ENCODE measurements at regions of chr16 and their contacts with region 1.

Region 1: GRCh38 chr16:28863929-28864793 is 518 bp downstream of the SH2B1 start:
- DNase-seq: no peak
- H3K4me3 ChIP-seq: peak overlapping the region; percentile 86 to 100 (median 93)
- H3K27ac ChIP-seq: no peak overlapping the region
- H3K4me1 ChIP-seq: peaks cover 0 to 8% (median 3%) of the 10 kb centered on the region in 4 experiments; a peak in 6 of 7 replicates
- H3K27me3 ChIP-seq: no peaks in the 10 kb centered on the region
- CTCF ChIP-seq: no peak
- EP300 ChIP-seq: peak in 1 of 2 experiments; percentile 82; a peak in 1 of 3 replicates
- POLR2A ChIP-seq: no peak
- RAD21 ChIP-seq: no peak

Region 2: DNA sequence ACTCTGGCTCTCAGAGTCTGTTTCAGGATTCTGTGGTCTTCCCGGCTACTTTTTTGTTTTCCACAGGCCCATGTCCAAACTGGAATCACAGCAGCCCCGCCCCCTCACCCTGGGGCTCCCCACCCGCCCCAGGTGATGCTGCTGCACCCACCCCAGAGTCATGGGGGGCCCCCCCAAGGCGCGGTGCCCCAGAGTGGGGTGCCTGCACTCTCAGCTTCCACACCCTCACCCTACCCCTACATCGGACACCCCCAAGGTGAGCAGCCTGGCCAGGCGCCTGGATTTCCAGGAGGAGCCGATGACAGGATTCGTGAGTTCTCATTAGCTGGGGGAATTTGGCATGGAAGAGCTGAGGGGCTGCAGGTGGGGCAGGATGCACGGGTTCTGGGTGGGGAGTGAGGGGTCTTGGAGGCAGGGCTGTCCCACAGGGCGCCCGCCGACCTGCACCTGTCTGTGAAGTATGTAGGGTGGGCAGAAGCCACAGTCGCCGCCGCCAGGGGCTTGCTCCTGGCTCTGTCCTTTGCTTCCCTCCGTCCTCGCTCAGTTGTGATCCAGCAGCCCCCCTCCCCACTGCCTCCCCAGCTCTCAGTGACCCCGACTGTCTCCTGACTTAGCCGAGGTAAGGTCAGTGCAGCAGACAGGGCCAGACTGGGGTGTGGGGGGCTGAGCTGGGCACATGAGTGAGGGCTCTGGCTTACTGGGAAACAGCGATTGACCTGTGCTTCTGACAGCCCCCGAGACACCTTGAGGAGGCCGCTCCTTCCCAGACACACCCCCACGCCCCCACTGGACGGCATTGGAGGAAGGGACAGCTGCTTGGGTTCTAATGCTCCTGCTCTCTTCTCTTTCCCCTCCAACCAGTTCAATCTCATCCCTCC is 28.1 kb before region 1 on chr16:
- CTCF ChIA-PET with region 1: interaction called, 3 read pairs
- POLR2A ChIA-PET with region 1: interaction called, 164 read pairs
- DNase-seq: no peak
- H3K4me3 ChIP-seq: no peak overlapping the region
- H3K27ac ChIP-seq: no peak overlapping the region
- H3K4me1 ChIP-seq: no peaks in the 10 kb centered on the region
- H3K27me3 ChIP-seq: no peaks in the 10 kb centered on the region
- CTCF ChIP-seq: no peak
- EP300 ChIP-seq: no peak
- POLR2A ChIP-seq: peak in 1 of 2 experiments; percentile 39; a peak in 1 of 3 replicates
- RAD21 ChIP-seq: no peak

Region 3: DNA sequence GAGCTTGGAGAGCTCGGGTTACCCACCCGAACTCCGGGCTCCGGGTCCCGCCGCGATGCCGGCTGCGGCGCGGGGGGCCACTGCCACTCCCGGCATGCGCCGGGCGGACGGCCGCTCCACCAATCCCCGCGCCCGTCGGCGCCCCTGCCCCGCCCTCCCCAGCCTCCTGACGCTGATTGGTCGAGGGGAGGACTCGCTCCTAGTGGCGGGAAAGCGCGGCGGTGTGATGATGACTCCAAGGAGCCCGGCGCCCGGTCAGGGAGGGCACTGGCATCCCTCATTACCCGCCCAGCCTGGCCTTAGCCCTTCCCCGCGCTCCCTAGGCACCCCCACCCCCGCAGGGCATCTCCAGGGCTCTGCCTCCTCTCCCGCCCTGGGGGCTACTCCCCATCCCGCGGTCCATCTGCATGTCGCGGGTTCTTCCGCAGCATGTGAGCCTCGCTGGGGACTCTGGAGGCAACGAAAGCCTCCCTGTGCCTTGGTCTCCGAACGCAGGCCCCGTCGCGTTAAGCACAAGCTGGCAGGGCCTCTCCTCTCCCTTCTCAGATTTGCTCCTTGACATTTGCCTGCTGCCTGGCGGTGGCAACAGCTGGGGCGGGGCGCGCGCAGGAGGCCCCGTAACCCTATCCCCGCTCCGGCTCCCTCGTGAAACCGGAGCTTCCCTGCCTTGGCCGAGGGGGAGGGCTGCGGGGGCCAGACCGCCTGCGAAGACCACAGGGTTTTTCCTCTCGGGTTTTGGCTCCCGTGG is 15.9 kb after region 1 on chr16:
- CTCF ChIA-PET with region 1: interaction called, 42 read pairs
- POLR2A ChIA-PET with region 1: interaction called, 89 read pairs
- DNase-seq: peak; percentile 67 to 89
- H3K4me3 ChIP-seq: peak overlapping the region; percentile 61 to 78 (median 68)
- H3K27ac ChIP-seq: peak overlapping the region; percentile 59; the same call in 1 of the 2 replicates
- H3K4me1 ChIP-seq: peaks cover 0 to 41% (median 30%) of the 10 kb centered on the region in 4 experiments; a peak in 6 of 7 replicates
- H3K27me3 ChIP-seq: peaks cover 0 to 8% (median 7%) of the 10 kb centered on the region in 4 experiments; a peak in 2 of 7 replicates
- CTCF ChIP-seq: no peak
- EP300 ChIP-seq: no peak
- POLR2A ChIP-seq: peak in 1 of 2 experiments; percentile 46; a peak in 1 of 3 replicates
- RAD21 ChIP-seq: no peak

Region 4: GRCh38 chr16:28935924-28936783 is 72.0 kb after region 1 on chr16:
- CTCF ChIA-PET with region 1: no interaction called
- POLR2A ChIA-PET with region 1: interaction called, 10 read pairs
- DNase-seq: peak; percentile 78 to 94
- H3K4me3 ChIP-seq: peak overlapping the region in 3 of 4 experiments; percentile 11 to 47 (median 19); a peak in 5 of 8 replicates
- H3K27ac ChIP-seq: no peak overlapping the region
- H3K4me1 ChIP-seq: no peaks in the 10 kb centered on the region; a peak in 1 of 7 replicates
- H3K27me3 ChIP-seq: no peaks in the 10 kb centered on the region
- CTCF ChIP-seq: no peak
- EP300 ChIP-seq: no peak
- POLR2A ChIP-seq: no peak
- RAD21 ChIP-seq: no peak